HEK293 (cell line): ENCODE measurements at regions of chr20 and their contacts with region 1.

Region 1: GRCh38 chr20:35994994-35995453 is 26.6 kb downstream of the CNBD2 start:
- H3K4me3 ChIP-seq: no peak overlapping the region
- H3K27ac ChIP-seq: no peak overlapping the region
- H3K4me1 ChIP-seq: no peaks in the 10 kb centered on the region
- CTCF ChIP-seq: peak; percentile 83

Region 2: DNA sequence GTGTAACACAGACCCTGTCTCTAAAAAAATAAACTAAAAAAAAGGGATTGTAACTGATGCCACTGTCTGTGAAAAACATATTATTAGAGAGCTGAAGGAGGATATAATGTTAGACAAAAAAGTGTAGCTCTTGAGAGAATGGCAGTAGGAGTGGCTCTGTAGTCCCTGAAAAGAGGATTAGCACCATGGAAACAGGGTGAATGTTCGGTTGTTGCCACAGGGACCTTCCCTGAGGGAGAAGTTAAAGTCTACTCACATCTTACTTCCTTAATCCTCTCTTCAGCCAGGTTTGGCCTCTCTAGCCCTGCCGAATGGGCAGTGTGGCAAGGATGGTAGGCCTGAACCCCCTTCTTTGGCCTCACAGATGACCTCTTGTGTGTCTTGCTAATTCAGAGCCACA is 52.8 kb before region 1 on chr20:
- CTCF ChIA-PET with region 1: no interaction called
- POLR2A ChIA-PET with region 1: no interaction called
- H3K4me3 ChIP-seq: no peak overlapping the region
- H3K27ac ChIP-seq: no peak overlapping the region
- H3K4me1 ChIP-seq: no peaks in the 10 kb centered on the region
- CTCF ChIP-seq: no peak

Region 3: GRCh38 chr20:35978041-35978513 is 16.9 kb before region 1 on chr20:
- CTCF ChIA-PET with region 1: interaction called, 97 read pairs
- POLR2A ChIA-PET with region 1: interaction called, 3 read pairs
- H3K4me3 ChIP-seq: no peak overlapping the region
- H3K27ac ChIP-seq: no peak overlapping the region
- H3K4me1 ChIP-seq: no peaks in the 10 kb centered on the region
- CTCF ChIP-seq: no peak

Region 4: DNA sequence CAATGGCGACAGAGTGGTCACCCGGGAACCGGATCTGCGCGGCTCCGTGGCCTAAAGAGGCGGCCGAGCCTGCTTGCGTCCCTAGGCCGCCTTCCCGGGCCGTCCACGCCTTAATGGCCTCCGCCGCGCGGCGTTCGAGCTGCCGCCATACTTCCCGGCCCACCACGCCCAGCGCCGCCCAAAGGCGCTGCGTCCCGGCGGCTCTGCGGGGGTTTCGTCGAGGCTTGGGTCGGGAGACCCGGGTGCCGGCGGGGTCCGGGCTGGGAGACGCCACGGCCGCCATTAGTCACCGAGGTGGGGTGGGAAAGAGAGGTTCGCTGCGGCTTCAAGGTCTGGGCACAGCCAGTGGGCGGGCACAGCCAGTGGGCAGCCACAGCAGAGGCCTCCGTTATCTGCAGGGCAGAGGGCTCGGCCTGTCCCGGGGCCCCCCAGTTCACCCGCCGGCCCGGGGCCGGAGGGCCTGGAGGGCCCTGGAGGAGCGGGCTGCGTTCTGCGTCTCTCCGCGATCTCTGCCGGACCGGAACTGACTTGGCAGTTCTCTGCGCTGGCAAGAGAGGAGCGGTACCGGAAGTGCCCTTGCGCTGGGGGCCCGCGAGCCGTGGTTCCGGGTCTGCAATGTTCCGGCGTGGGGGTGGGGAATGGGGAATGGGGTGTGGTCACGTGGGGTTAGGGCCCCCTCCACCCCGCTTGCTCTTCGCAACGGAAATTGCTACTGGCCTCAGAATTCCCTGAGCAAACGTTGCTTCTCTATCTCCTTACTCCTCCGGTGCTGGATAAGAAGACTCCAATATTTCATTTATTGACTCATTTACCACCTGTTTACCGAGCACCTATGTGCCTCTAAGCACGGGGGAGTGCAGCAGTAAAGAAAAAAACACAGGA is 55.7 kb after region 1 on chr20:
- CTCF ChIA-PET with region 1: interaction called, 10 read pairs
- POLR2A ChIA-PET with region 1: interaction called, 3 read pairs
- H3K4me3 ChIP-seq: peak overlapping the region; percentile 97
- H3K27ac ChIP-seq: peak overlapping the region; percentile 92
- H3K4me1 ChIP-seq: no peaks in the 10 kb centered on the region
- CTCF ChIP-seq: no peak

Region 5: GRCh38 chr20:36154700-36155628 is 159.9 kb after region 1 on chr20 and contains the start of gene EPB41L1:
- CTCF ChIA-PET with region 1: interaction called, 17 read pairs
- POLR2A ChIA-PET with region 1: no interaction called
- H3K4me3 ChIP-seq: peak within 1 kb of the TSS; percentile 55
- H3K27ac ChIP-seq: peak within 1 kb of the TSS; percentile 46; the same call in 1 of the 2 replicates
- H3K4me1 ChIP-seq: peaks cover 8% of the 10 kb centered on the region
- CTCF ChIP-seq: no peak

Region 6: DNA sequence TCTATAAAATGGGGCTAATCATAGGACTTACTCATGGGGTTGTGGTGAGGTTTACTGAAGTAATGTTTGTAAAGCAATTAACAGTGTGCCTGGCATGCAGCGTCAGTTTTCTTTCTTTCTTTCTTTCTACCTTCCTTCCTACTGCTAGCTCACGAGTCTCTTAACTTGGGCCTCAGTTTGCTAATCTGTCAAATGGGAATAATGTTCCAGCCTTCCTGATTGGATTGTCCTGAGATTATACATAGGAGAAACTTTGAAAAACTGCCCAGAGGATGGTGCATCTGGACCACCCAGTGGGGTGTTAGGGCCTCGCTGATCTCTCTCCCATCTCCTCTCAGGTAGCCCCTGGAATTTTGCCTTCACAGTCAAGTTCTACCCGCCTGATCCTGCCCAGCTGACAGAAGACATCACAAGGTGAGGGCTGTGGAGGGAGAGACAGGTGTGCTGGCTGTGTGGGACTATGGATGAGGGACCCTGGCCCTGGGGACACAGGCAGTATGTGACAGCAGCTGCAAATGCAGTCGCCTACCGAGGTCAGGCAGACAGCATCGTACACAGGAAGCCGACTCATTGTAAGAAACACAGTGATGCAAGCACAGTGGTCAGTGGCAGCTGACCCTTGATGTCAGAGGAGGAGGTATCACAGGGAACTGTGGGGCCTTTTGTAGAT is 187.0 kb after region 1 on chr20:
- CTCF ChIA-PET with region 1: no interaction called
- POLR2A ChIA-PET with region 1: no interaction called
- H3K4me3 ChIP-seq: no peak overlapping the region
- H3K27ac ChIP-seq: no peak overlapping the region
- H3K4me1 ChIP-seq: no peaks in the 10 kb centered on the region
- CTCF ChIP-seq: no peak